Psoas muscle (tissue), 8 donors: ENCODE measurements at regions of chr5 and their contacts with region 1.

Region 1: DNA sequence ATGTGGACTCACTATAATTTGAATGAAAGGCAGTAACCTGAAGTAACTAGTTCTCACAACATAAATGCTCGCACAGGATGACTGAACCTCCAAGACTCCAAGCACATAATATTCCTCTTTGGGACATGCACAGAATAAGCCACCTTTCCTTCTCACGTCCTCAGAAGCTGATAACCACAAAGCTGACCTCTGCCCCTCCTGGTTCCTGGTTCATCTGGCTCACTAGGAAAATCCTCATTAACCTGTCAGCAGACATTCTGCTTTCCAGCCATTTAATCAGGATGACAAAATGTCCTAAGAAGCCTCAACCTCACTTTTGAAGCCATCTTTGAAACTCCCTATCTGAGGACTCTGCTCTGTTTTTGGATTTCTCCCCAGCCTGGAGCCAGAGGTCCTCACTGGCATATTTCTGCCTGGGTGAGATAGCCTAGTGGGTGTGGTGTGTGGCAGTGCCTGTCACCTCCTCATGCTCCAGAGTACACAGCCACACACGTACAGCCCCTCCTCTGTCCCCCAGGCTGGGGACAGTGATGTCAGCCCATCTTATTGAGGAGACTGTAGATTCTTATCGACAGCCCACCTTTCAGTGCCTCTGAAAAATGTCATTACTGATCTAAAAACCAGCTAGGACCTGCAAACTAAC is 10.3 kb downstream of the ANKH start:
- DNase-seq: no peak
- ATAC-seq: no peak
- H3K4me3 ChIP-seq: no peak overlapping the region
- H3K27ac ChIP-seq: peak overlapping the region; percentile 38
- H3K4me1 ChIP-seq: peaks cover 48% of the 10 kb centered on the region
- H3K27me3 ChIP-seq: no peaks in the 10 kb centered on the region
- CTCF ChIP-seq: no peak

Region 2: DNA sequence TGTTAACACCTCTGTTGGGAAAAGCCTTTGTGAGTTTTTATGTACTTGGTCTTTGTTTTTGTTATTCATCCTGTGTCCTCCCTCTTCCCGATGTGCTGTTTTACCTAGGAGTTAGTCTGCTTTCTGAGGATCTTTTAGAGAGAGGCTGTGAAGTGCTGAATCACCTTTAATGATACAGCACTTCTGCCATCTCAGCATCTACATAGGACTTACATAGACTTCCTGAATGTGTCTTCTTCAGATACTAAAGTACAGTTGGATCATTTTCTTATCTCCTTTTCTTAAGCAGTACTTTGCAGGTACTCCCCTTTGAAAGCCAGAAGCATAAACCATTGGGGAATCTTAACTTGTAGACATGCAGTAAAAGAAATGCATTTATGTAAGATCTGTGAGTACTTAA is 165.2 kb before region 1 on chr5:
- intact Hi-C with region 1: no loop called
- DNase-seq: no peak
- ATAC-seq: no peak
- H3K4me3 ChIP-seq: no peak overlapping the region
- H3K27ac ChIP-seq: no peak overlapping the region
- H3K4me1 ChIP-seq: no peaks in the 10 kb centered on the region
- H3K27me3 ChIP-seq: no peaks in the 10 kb centered on the region
- CTCF ChIP-seq: no peak

Region 3: DNA sequence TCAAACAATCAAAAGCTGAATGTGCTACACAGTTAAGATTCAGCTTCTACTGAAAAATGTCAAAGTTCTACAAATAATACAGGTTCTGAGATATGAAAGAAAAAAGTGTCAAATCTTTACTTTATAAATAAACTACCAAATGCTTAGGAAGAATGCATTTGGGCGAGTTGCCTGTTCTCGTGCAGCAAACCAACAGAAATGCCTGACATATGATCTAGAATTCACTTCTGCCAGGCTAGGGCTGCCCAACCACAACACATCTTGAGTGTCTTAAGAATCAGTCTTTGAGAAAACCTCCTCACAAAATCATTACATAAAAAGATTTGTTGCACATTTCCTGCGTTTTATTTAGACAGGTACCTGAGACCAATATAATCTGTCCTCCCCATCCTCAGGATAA is 31.8 kb before region 1 on chr5:
- intact Hi-C with region 1: loop called in 1 of 2 experiments (anchors 5 kb)
- DNase-seq: no peak
- ATAC-seq: no peak
- H3K4me3 ChIP-seq: no peak overlapping the region
- H3K27ac ChIP-seq: peak overlapping the region; percentile 30
- H3K4me1 ChIP-seq: peaks cover 63% of the 10 kb centered on the region
- H3K27me3 ChIP-seq: no peaks in the 10 kb centered on the region
- CTCF ChIP-seq: no peak